Sciatic nerve (tissue), 2 donors: ENCODE measurements at regions of chr5 and their contacts with region 1.

Region 1: GRCh38 chr5:42950440-42951292 is 89.5 kb downstream of the ANXA2R start:
- DNase-seq: peak; percentile 68
- ATAC-seq: peak; percentile 84

Region 2: GRCh38 chr5:42994246-42995151 is 43.8 kb after region 1 on chr5:
- intact Hi-C with region 1: loop called (anchors 5 kb)
- DNase-seq: peak; percentile 93
- ATAC-seq: peak; percentile 89

Region 3: GRCh38 chr5:43161244-43161643 is 210.6 kb after region 1 on chr5:
- intact Hi-C with region 1: no loop called
- DNase-seq: no peak
- ATAC-seq: no peak